Motor neuron (in vitro differentiated cells): ENCODE measurements at regions of chr1 and their contacts with region 1.

Region 1: DNA sequence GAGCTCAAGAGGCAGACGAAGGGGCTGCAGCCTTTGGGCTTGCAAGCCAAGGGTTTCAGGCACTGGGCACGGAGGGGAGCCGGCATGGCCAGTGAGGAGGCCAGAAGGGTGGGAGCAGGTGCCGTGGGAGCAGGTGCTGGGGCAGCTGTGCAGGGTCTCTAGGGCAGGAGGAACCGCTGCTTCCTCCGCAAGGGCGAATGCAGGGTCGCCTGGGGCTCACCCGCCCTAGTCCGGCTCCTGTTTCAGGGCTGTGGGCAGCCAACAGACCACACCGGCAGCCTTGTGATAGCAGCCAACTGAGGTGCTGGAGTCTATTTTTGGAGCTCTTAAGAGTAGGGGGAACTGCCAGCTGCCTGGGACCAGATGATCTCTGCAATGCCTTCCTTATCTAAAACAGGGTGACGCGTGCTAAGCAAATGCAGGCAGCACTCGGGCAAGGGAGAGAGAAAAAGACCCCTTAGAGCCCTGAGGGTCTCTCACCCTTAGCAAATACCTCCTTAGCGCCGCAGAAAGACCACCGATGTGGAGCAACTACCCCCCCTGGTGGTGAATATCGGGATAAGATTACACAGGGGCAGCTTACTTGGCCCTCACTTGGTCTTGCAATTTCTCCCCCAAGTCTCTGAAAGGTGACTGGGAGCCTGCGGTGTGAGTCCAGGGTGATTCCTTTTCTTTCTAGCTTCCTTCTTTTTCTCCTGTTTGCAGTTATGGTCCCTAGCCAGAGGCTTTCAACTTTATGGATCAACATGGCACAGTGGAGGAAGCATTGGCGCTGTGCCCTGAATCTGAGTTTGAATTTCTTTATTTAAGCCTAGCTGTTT is 20.7 kb upstream of the MAPKAPK2 start:
- ATAC-seq: peak; percentile 61 to 93 (median 89)
- H3K4me3 ChIP-seq: peak overlapping the region in 2 of 5 donors; percentile 11 to 18
- H3K27ac ChIP-seq: no peak overlapping the region
- H3K4me1 ChIP-seq: peaks cover 8 to 10% of the 10 kb centered on the region in 2 donors

Region 2: DNA sequence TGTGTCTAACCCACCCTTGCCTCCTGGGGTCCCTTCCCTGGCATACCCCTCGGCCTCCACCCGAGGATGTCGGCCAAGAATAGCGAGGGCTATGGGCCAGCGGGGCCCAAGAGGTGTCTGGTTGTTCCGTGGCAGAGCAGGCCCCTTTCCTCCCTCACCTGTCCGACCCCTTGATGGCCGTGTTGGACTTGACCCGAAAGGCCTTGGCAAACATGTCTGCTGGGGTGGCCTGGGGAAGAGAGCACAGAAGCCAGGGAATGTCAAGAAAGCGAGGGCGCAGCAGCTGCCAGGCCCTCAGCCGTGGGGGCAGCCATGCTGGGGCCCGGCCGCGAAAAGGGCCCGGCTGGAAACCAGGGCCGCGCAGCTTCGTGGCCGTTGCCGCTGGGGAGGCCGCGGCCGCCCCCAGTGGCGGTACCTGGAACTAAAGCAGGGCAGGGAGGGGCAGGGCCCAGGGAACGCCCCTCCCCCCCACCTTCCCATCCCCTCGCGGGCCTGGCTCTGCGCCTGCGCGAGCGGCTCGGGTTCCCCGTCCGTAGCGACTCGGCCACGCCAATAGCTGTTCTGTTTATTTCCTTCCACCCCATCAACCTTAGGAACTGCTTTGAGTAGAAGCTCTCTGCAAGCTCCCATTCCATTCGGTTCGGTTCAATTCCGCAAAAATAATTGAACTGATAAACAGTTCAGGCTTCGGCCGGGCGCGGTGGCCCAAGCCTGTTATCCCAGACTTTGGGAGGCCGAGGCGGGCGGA is 51.7 kb before region 1 on chr1 and contains the start of gene EIF2D:
- in situ Hi-C with region 1: loop called in 1 of 9 experiments (anchors 10 kb)
- ATAC-seq: peak; percentile 97 to 99 (median 98)
- H3K4me3 ChIP-seq: peak within 1 kb of the TSS; percentile 56 to 68 (median 58)
- H3K27ac ChIP-seq: peak within 1 kb of the TSS; percentile 90 to 93
- H3K4me1 ChIP-seq: peaks cover 4 to 7% of the 10 kb centered on the region in 2 donors
- total RNA-seq, gene EIF2D: 30.8 to 55.2 (median 40.2) TPM

Region 3: DNA sequence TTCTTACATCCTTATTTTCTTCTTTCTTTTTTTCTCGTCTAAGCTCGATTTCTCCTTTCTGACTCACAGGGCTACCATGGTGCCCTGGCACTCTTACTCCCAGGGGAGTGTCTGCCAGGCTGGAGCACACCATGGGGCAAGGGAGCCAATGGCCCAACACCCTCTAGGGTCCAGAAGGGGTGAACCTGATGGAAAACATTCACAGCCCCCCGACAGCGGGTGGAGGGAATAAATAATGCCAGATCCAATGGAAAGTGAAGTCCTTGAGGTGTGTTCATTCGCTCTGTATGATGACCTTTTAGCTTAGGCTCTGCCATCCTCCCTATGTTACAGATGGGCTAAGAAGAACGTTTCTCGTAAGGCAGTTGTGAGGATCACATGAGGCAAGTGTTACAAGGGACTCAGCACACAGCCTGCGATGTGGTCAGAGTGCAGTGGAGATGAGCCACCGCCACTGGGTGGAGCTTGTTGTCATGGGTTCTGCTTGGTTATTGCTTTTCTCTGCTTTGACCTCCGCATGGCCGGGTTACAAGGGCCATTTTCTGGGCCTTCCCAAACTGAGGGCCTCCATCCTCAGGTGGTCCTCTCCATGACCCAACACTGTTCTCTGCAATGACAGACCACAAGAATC is 261.2 kb after region 1 on chr1:
- in situ Hi-C with region 1: no loop called
- ATAC-seq: peak in 1 of 8 experiments; percentile 16
- H3K4me3 ChIP-seq: no peak overlapping the region
- H3K27ac ChIP-seq: no peak overlapping the region
- H3K4me1 ChIP-seq: no peaks in the 10 kb centered on the region